Aorta (tissue), 5 donors: ENCODE measurements at regions of chr3 and their contacts with region 1.

Region 1: GRCh38 chr3:139111392-139112229 is 66.9 kb upstream of the PRR23C start:
- DNase-seq: peak; percentile 62 to 85
- ATAC-seq: no peak
- H3K4me3 ChIP-seq: no peak overlapping the region
- H3K27ac ChIP-seq: no peak overlapping the region
- H3K4me1 ChIP-seq: no peaks in the 10 kb centered on the region
- H3K27me3 ChIP-seq: no peaks in the 10 kb centered on the region

Region 2: DNA sequence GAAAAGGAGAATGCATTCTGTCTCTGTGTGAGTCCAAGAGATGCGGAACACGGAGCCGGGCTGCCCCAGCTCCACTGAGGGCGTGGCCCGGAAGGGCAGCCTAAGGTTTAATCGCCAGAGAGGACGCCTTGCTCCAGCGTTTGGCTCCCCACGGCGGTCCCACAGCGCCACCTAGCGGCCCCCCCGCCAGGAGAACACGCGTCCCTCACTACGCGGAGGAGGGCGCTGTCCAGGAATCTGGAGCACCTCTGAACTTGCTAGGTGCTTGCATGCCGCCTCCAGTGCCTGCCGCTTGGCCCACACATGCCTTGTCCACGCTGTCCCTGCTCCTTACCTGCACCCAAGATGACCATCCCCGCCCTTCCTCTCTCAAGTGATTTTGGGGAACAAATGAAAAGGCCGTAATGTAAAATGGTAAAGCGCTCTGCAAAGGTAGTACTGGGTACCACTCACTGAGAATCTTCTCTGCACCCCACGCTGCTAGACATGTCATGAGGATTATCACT is 217.8 kb after region 1 on chr3:
- intact Hi-C with region 1: loop called (anchors 2 kb)
- DNase-seq: peak; percentile 90 to 96
- ATAC-seq: peak; percentile 91
- H3K4me3 ChIP-seq: no peak overlapping the region
- H3K27ac ChIP-seq: no peak overlapping the region
- H3K4me1 ChIP-seq: no peaks in the 10 kb centered on the region
- H3K27me3 ChIP-seq: no peaks in the 10 kb centered on the region